ENCODE measurements at regions of chr6 and their contacts with region 1.

Region 1: DNA sequence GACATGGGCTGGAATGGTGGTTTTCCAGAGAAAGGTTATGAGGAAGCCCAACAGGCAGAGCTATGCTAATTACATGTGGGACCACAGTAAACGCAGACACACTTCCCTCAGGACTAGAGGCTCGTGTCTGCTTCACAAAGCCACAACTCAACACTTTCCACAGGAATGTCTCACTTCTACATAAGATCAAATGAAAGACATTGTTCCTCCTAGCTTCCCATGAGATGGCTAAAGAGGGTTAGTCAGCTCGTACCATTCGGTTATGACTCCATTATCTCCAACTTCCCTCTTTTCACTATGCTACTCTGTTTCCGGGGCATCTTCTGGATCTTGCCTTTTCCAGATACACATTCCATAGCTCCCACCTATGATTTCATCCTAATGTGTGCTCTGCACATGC is 29.1 kb upstream of the ZC3H12D start:
- DNase-seq: no peak
- H3K4me3 ChIP-seq: no peak overlapping the region
- H3K27ac ChIP-seq: no peak overlapping the region
- H3K4me1 ChIP-seq: no peaks in the 10 kb centered on the region
- H3K27me3 ChIP-seq: no peaks in the 10 kb centered on the region
- CTCF ChIP-seq: no peak

Region 2: GRCh38 chr6:149028767-149029405 is 485.0 kb before region 1 on chr6:
- dilution Hi-C with region 1: loop called (anchors 25 kb)
- DNase-seq: peak; percentile 76
- H3K4me3 ChIP-seq: no peak overlapping the region
- H3K27ac ChIP-seq: no peak overlapping the region
- H3K4me1 ChIP-seq: no peaks in the 10 kb centered on the region
- H3K27me3 ChIP-seq: no peaks in the 10 kb centered on the region
- CTCF ChIP-seq: peak; percentile 35 to 40 (median 40)

Region 3: GRCh38 chr6:149600508-149600907 is 86.6 kb after region 1 on chr6:
- dilution Hi-C with region 1: no loop called
- DNase-seq: no peak
- H3K4me3 ChIP-seq: no peak overlapping the region
- H3K27ac ChIP-seq: no peak overlapping the region
- H3K4me1 ChIP-seq: no peaks in the 10 kb centered on the region
- H3K27me3 ChIP-seq: no peaks in the 10 kb centered on the region
- CTCF ChIP-seq: no peak